MCF 10A (cell line): ENCODE measurements at regions of chr10 and their contacts with region 1.

Region 1: DNA sequence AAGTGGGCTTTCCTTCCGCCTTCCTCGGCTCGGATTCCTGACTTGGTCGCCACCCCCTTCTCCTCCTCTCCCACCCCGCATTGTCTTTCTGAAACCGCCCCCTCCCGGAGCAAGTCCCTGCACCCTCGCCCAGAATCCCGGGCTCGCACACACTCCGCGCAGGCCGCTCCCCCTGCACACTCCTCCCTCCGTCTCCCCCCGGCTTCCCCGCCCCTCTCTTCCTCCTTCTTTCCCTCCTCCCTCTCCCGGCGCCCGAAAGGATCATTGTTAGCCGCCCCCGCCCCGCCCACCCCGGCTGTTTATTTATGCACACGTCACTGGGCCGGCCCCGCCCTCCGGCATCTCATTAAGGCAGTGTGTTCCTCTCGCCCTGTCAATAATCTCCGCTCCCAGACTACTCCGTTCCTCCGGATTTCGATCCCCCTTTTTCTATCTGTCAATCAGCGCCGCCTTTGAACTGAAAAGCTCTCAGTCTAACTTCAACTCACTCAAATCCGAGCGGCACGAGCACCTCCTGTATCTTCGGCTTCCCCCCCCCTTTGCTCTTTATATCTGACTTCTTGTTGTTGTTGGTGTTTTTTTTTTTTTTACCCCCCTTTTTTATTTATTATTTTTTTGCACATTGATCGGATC is at the start of gene TCF7L2:
- DNase-seq: peak; percentile 99
- H3K4me3 Mint-ChIP-seq: peak within 1 kb of the TSS; percentile 76
- H3K27ac Mint-ChIP-seq: peak within 1 kb of the TSS; percentile 87
- H3K4me1 Mint-ChIP-seq: peaks cover 13% of the 10 kb centered on the region
- H3K27me3 Mint-ChIP-seq: no peaks in the 10 kb centered on the region
- CTCF ChIP-seq: no peak
- total RNA-seq, gene TCF7L2: 25.2 and 25.7 TPM in 2 replicates

Region 2: DNA sequence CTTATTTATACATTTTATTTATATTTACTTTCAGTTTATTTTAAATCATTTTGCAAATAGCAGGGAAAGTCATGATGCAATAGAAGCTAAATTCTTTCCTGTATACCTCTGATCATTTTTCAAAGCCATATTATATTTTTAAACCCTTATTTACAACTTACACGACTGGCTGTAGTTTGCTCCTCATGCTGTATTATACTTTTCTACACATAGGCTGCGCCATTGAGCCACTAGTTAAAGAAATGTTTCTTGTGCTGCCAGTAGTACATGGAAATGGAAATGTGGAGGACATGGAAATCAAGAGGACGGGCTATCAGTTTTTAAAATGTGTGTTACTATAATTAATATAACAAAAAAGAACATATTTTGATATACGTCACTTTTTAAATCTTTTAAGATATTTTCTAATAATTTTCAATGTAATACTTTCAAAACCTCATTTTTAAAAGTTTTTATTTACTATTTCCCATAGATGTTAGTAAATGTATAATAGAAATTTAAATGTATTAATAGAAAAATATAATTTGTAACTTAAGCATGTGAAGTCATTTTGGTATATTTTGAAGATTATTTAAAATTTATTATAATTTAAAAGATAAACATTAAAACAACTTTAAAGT is 384.4 kb before region 1 on chr10:
- CTCF ChIA-PET with region 1: interaction called, 3 read pairs
- POLR2A ChIA-PET with region 1: interaction called, 3 read pairs
- intact Hi-C with region 1: loop called (anchors 2 kb)
- DNase-seq: peak; percentile 78
- H3K4me3 Mint-ChIP-seq: no peak overlapping the region
- H3K27ac Mint-ChIP-seq: no peak overlapping the region
- H3K4me1 Mint-ChIP-seq: no peaks in the 10 kb centered on the region
- H3K27me3 Mint-ChIP-seq: no peaks in the 10 kb centered on the region
- CTCF ChIP-seq: peak; percentile 80

Region 3: GRCh38 chr10:112811740-112812551 is 138.0 kb before region 1 on chr10:
- CTCF ChIA-PET with region 1: no interaction called
- POLR2A ChIA-PET with region 1: interaction called, 11 read pairs
- intact Hi-C with region 1: loop called (anchors 5 kb)
- DNase-seq: peak; percentile 89
- H3K4me3 Mint-ChIP-seq: peak overlapping the region; percentile 65
- H3K27ac Mint-ChIP-seq: peak overlapping the region; percentile 87
- H3K4me1 Mint-ChIP-seq: peaks cover 35% of the 10 kb centered on the region
- H3K27me3 Mint-ChIP-seq: no peaks in the 10 kb centered on the region
- CTCF ChIP-seq: no peak

Region 4: DNA sequence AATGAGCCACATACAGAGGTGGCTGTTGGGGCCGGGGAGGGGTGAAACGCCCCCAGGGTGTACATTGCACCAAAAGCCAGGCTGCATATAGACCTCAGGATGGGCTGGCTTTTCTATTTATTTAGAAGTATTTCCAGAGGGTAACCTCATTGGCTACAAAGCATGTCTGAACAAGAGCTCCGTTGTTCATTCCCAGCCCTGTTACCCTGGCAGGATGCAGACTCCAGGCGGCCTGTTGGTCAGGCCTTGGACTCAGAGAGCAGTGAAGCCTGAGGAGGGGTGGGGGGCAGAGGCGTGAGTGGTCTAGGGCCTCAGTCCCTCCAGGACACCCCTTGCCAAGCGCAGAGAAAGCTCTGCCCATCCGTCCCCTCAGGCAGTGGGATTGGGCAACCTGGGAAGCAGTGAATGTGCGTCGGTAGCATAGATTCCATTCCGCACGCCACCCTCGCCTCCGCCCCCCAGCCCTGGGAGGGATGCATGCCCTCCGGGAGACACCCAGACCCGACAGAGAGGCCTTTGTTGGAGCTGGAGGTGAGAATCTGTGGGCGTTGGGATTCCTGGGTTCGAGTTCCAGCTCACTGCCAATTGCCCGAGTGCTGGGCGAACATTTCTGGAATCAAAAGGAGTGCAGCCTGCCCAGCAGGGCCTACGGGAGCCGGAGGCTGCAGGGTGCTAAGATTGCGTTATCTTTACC is 42.0 kb after region 1 on chr10:
- CTCF ChIA-PET with region 1: interaction called, 5 read pairs
- POLR2A ChIA-PET with region 1: interaction called, 26 read pairs
- intact Hi-C with region 1: no loop called
- DNase-seq: peak; percentile 86
- H3K4me3 Mint-ChIP-seq: peak overlapping the region; percentile 50
- H3K27ac Mint-ChIP-seq: peak overlapping the region; percentile 49
- H3K4me1 Mint-ChIP-seq: peaks cover 23% of the 10 kb centered on the region
- H3K27me3 Mint-ChIP-seq: no peaks in the 10 kb centered on the region
- CTCF ChIP-seq: no peak

Region 5: DNA sequence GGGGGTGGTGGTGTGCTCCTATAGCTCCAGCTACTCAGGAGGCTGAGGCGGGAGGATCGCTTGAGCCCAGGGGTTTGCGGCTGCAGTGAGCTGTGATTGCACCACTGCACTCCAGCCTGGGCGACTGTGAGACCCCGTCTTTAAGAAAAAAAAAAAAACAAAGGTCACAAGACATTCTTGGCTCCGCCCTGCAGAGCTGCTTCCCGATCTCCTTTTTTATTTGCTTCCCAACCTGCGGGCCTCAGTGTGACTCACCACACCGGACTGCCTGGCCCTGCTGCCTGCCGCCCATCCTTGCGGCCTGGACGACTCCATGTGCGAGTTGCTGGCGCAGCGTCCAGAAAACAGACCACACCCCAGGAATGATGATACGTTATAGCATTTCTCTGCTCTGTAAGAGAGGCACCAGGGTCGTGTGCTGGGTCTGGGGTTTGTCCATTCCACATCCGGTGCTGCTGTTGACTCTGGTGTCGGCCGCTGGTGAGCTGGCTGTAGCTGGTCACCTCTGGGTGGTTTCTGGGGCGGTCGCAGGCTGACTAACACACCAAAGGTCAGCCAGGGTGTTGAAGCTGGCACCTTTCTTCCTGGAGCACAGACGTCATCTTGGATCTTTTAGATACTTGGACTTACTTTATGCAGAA is 123.7 kb after region 1 on chr10:
- CTCF ChIA-PET with region 1: interaction called, 6 read pairs
- POLR2A ChIA-PET with region 1: interaction called, 38 read pairs
- intact Hi-C with region 1: loop called (anchors 2 kb)
- DNase-seq: peak; percentile 96
- H3K4me3 Mint-ChIP-seq: peak overlapping the region; percentile 69
- H3K27ac Mint-ChIP-seq: peak overlapping the region; percentile 97
- H3K4me1 Mint-ChIP-seq: peaks cover 39% of the 10 kb centered on the region
- H3K27me3 Mint-ChIP-seq: no peaks in the 10 kb centered on the region
- CTCF ChIP-seq: no peak

Region 6: DNA sequence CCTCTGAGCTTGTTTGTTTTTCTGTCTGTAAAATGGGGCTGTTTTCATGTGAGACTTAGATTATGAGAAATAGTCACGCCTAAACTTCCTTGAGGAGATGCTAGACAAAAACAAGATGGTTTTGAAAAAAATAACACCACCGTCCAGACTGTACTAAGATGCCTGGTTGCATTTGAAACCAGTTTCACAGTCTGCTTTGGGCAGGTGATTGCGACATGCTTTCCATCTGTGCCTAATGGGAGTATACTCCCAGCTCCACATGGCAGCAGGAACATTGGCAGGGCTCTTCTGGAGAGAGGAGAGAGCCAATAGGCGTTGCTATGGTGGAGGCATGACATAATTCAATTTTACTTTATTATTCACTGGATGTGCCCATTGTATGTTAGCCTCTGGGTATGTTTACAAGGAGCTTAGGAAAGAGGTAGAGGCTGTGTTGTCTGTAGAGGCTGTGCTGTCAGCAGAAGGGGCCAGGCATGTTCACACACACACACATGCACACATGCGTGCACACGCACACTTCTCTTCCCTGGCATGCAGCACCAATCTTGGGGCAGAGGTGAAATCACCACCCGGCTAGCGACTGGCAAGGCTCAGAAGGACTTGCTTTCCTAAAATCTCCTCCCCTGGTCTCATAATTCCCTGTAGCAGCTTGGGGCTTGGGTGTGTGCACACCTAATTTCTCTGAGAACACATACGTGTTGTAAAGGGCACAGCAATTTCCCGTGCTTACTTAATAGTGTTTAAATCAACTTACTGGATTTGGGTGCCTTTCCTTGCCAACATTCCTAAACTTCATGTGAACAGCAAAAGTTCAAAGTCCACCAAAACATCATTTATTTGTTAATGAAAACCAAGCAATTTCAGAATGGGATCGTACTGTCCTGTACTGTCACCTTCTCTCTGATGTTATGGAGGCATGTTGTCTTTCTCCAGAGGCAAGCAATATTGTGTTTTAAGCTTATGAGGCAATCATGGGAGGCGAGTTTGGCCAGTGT is 162.2 kb after region 1 on chr10:
- CTCF ChIA-PET with region 1: interaction called, 3 read pairs
- POLR2A ChIA-PET with region 1: interaction called, 6 read pairs
- intact Hi-C with region 1: loop called (anchors 5 kb)
- DNase-seq: peak; percentile 91
- H3K4me3 Mint-ChIP-seq: no peak overlapping the region
- H3K27ac Mint-ChIP-seq: no peak overlapping the region
- H3K4me1 Mint-ChIP-seq: no peaks in the 10 kb centered on the region
- H3K27me3 Mint-ChIP-seq: no peaks in the 10 kb centered on the region
- CTCF ChIP-seq: no peak

Region 7: GRCh38 chr10:113385021-113385999 is 435.3 kb after region 1 on chr10:
- CTCF ChIA-PET with region 1: interaction called, 3 read pairs
- POLR2A ChIA-PET with region 1: no interaction called
- intact Hi-C with region 1: loop called (anchors 10 kb)
- DNase-seq: peak; percentile 83
- H3K4me3 Mint-ChIP-seq: no peak overlapping the region
- H3K27ac Mint-ChIP-seq: no peak overlapping the region
- H3K4me1 Mint-ChIP-seq: peaks cover 20% of the 10 kb centered on the region
- H3K27me3 Mint-ChIP-seq: peaks cover 32% of the 10 kb centered on the region
- CTCF ChIP-seq: peak; percentile 91